Esophagus muscularis mucosa (tissue), 4 donors: ENCODE measurements at regions of chr2 and their contacts with region 1.

Region 1: GRCh38 chr2:227479865-227480475 is 8.0 kb downstream of the AGFG1 start:
- DNase-seq: no peak
- H3K4me3 ChIP-seq: no peak overlapping the region
- H3K27ac ChIP-seq: no peak overlapping the region
- H3K4me1 ChIP-seq: peaks cover 4 to 73% (median 64%) of the 10 kb centered on the region in 4 donors
- H3K27me3 ChIP-seq: no peaks in the 10 kb centered on the region
- CTCF ChIP-seq: peak; percentile 24 to 32 (median 30)
- EP300 ChIP-seq: no peak
- POLR2A ChIP-seq: no peak

Region 2: GRCh38 chr2:227515742-227516141 is 35.8 kb after region 1 on chr2:
- intact Hi-C with region 1: loop called (anchors 5 kb)
- DNase-seq: no peak
- H3K4me3 ChIP-seq: no peak overlapping the region
- H3K27ac ChIP-seq: no peak overlapping the region
- H3K4me1 ChIP-seq: peaks cover 54 to 93% (median 77%) of the 10 kb centered on the region in 4 donors
- H3K27me3 ChIP-seq: no peaks in the 10 kb centered on the region
- CTCF ChIP-seq: no peak
- EP300 ChIP-seq: no peak
- POLR2A ChIP-seq: no peak

Region 3: GRCh38 chr2:228263156-228263555 is 783.2 kb after region 1 on chr2:
- intact Hi-C with region 1: no loop called
- DNase-seq: no peak
- H3K4me3 ChIP-seq: no peak overlapping the region
- H3K27ac ChIP-seq: no peak overlapping the region
- H3K4me1 ChIP-seq: no peaks in the 10 kb centered on the region
- H3K27me3 ChIP-seq: no peaks in the 10 kb centered on the region
- CTCF ChIP-seq: no peak
- EP300 ChIP-seq: no peak
- POLR2A ChIP-seq: no peak